Right lobe of liver (tissue), 6 donors: ENCODE measurements at regions of chr1 and their contacts with region 1.

Region 1: GRCh38 chr1:171300401-171300800 is 13.6 kb upstream of the FMO4 start:
- DNase-seq: no peak
- ATAC-seq: no peak
- H3K4me3 ChIP-seq: no peak overlapping the region
- H3K27ac ChIP-seq: no peak overlapping the region
- H3K4me1 ChIP-seq: no peaks in the 10 kb centered on the region
- H3K27me3 ChIP-seq: no peaks in the 10 kb centered on the region
- CTCF ChIP-seq: no peak
- POLR2A ChIP-seq: no peak

Region 2: GRCh38 chr1:171251042-171251951 is 49.1 kb before region 1 on chr1:
- intact Hi-C with region 1: loop called (anchors 10 kb)
- DNase-seq: peak in 1 of 3 donors; percentile 44
- ATAC-seq: peak; percentile 70 to 79 (median 75)
- H3K4me3 ChIP-seq: peak overlapping the region; percentile 57 to 63 (median 62)
- H3K27ac ChIP-seq: no peak overlapping the region
- H3K4me1 ChIP-seq: peaks cover 0 to 6% (median 0%) of the 10 kb centered on the region in 4 donors
- H3K27me3 ChIP-seq: no peaks in the 10 kb centered on the region
- CTCF ChIP-seq: peak; percentile 28 to 60 (median 50)
- POLR2A ChIP-seq: no peak

Region 3: DNA sequence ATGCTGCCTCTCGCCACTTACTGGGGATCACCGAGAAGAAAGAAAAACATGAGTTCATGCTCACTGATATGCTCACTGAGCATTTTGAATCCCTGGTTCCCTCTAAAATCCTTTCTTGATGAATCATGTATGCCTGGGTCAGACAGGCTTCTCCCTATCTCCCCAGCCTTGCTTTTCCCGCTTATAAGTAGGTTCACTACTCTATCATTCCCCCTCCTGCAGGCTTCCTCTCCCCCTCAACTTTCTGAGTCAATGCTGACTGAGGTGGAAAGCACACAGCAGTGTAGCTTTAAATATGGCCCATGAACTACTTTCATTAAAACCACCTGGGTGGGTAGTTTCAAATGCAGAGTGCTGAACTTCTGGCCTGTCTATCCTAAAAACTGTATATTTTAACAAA is 55.3 kb after region 1 on chr1:
- intact Hi-C with region 1: no loop called
- DNase-seq: no peak
- ATAC-seq: no peak
- H3K4me3 ChIP-seq: no peak overlapping the region
- H3K27ac ChIP-seq: no peak overlapping the region
- H3K4me1 ChIP-seq: peaks cover 0 to 25% (median 7%) of the 10 kb centered on the region in 4 donors
- H3K27me3 ChIP-seq: no peaks in the 10 kb centered on the region
- CTCF ChIP-seq: no peak
- POLR2A ChIP-seq: no peak